ENCODE measurements at regions of chr12 and their contacts with region 1.

Region 1: GRCh38 chr12:104790296-104791125 is 167.6 kb downstream of the SLC41A2 start:
- DNase-seq: peak; percentile 50
- H3K4me3 ChIP-seq: no peak overlapping the region
- H3K27ac ChIP-seq: no peak overlapping the region
- H3K4me1 ChIP-seq: peaks cover 4 to 5% of the 10 kb centered on the region in 2 experiments; a peak in 2 of 4 replicates
- H3K27me3 ChIP-seq: no peaks in the 10 kb centered on the region
- CTCF ChIP-seq: peak; percentile 60
- EP300 ChIP-seq: no peak
- RAD21 ChIP-seq: peak; percentile 50

Region 2: GRCh38 chr12:104769144-104769561 is 21.4 kb before region 1 on chr12:
- CTCF ChIA-PET with region 1: interaction called, 13 read pairs
- POLR2A ChIA-PET with region 1: no interaction called
- DNase-seq: no peak
- H3K4me3 ChIP-seq: no peak overlapping the region
- H3K27ac ChIP-seq: no peak overlapping the region
- H3K4me1 ChIP-seq: no peaks in the 10 kb centered on the region
- H3K27me3 ChIP-seq: no peaks in the 10 kb centered on the region
- CTCF ChIP-seq: no peak
- EP300 ChIP-seq: no peak
- RAD21 ChIP-seq: no peak

Measured in SK-N-SH (cell line).